ENCODE measurements at regions of chr21 and their contacts with region 1.

Region 1: GRCh38 chr21:40143822-40144525 is 276.7 kb downstream of the PCP4 start:
- DNase-seq: peak; percentile 10
- ATAC-seq: peak; percentile 78
- H3K4me3 ChIP-seq: no peak overlapping the region
- H3K27ac ChIP-seq: no peak overlapping the region
- H3K4me1 ChIP-seq: no peaks in the 10 kb centered on the region
- H3K27me3 ChIP-seq: no peaks in the 10 kb centered on the region
- CTCF ChIP-seq: peak; percentile 64
- EP300 ChIP-seq: no peak
- POLR2A ChIP-seq: no peak
- RAD21 ChIP-seq: no peak

Region 2: GRCh38 chr21:40841524-40842202 is 697.7 kb after region 1 on chr21:
- CTCF ChIA-PET with region 1: no interaction called
- POLR2A ChIA-PET with region 1: no interaction called
- in situ Hi-C with region 1: no loop called
- intact Hi-C with region 1: loop called (anchors 5 kb)
- DNase-seq: peak; percentile 6
- ATAC-seq: peak; percentile 100
- H3K4me3 ChIP-seq: no peak overlapping the region; a peak in 1 of 6 replicates
- H3K27ac ChIP-seq: no peak overlapping the region
- H3K4me1 ChIP-seq: no peaks in the 10 kb centered on the region
- H3K27me3 ChIP-seq: peaks cover 0 to 3% of the 10 kb centered on the region in 2 experiments; a peak in 3 of 5 replicates
- CTCF ChIP-seq: peak; percentile 60
- EP300 ChIP-seq: no peak
- POLR2A ChIP-seq: no peak
- RAD21 ChIP-seq: no peak

Region 3: GRCh38 chr21:41068967-41069642 is 925.1 kb after region 1 on chr21:
- CTCF ChIA-PET with region 1: interaction called, 14 read pairs
- POLR2A ChIA-PET with region 1: no interaction called
- in situ Hi-C with region 1: loop called (anchors 5 kb)
- intact Hi-C with region 1: no loop called
- DNase-seq: peak; percentile 50
- ATAC-seq: peak; percentile 98
- H3K4me3 ChIP-seq: no peak overlapping the region
- H3K27ac ChIP-seq: no peak overlapping the region
- H3K4me1 ChIP-seq: no peaks in the 10 kb centered on the region
- H3K27me3 ChIP-seq: peaks cover 0 to 13% of the 10 kb centered on the region in 2 experiments; a peak in 2 of 5 replicates
- CTCF ChIP-seq: peak; percentile 93
- EP300 ChIP-seq: no peak
- POLR2A ChIP-seq: no peak
- RAD21 ChIP-seq: peak; percentile 65

Measured in HepG2 (cell line).